Activated CD4-positive, alpha-beta T cell treated with anti-CD3 and anti-CD28 coated beads, Interleukin-2, amount 10 ng/mL, durations not matched to agents 7 days and 5 days (primary cell): ENCODE measurements at regions of chr7 and their contacts with region 1.

Region 1: GRCh38 chr7:55964261-55965099 is at the start of gene NIPSNAP2:
- DNase-seq: peak; percentile 42
- H3K4me3 Mint-ChIP-seq: peak within 1 kb of the TSS; percentile 82
- H3K27ac Mint-ChIP-seq: peak within 1 kb of the TSS; percentile 93
- H3K4me1 Mint-ChIP-seq: peaks cover 33% of the 10 kb centered on the region
- H3K27me3 Mint-ChIP-seq: no peaks in the 10 kb centered on the region
- total RNA-seq, gene NIPSNAP2: 35.4 to 38.6 TPM

Region 2: DNA sequence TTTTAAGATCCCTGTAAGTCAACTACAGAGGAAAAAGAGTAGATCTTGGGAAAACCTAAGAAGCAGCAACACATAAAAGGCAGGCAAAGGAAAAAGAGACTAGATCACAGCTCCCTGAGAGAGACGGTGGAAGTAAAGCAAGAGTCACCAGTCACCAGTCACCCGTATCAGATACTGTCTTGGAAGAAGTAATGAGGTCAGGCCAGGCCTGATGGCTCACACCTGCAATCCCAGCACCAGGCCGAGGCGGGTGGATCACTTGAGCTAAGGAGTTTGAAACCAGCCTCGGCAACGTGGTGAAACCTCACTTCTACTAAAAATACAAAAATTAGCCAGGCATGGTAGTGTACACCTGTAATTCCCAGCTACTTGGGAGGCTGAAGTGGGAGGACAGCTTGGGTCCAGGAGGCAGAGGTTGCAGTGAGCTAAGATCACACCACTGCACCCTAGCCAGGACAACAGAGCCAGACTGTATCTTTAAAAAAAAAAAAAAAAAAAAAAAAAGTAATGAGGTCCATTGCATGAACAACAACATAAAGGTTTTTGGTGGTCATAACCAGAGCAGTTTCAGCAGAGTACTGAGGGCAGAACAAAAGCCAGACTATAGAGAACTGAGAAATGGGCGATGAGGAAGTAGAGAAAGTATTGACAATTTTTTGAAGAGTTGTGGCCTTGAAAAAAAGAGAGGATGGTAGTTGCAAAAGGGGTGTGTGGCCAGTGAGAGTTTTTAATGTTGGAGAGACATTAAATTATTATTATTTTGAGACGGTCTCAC is 60.3 kb before region 1 on chr7:
- CTCF ChIA-PET with region 1: no interaction called
- POLR2A ChIA-PET with region 1: no interaction called
- DNase-seq: no peak
- H3K4me3 Mint-ChIP-seq: no peak overlapping the region
- H3K27ac Mint-ChIP-seq: no peak overlapping the region
- H3K4me1 Mint-ChIP-seq: no peaks in the 10 kb centered on the region
- H3K27me3 Mint-ChIP-seq: no peaks in the 10 kb centered on the region

Region 3: GRCh38 chr7:55977831-55978230 is 13.4 kb after region 1 on chr7:
- CTCF ChIA-PET with region 1: interaction called, 6 read pairs
- POLR2A ChIA-PET with region 1: interaction called, 10 read pairs
- DNase-seq: no peak
- H3K4me3 Mint-ChIP-seq: no peak overlapping the region
- H3K27ac Mint-ChIP-seq: no peak overlapping the region
- H3K4me1 Mint-ChIP-seq: no peaks in the 10 kb centered on the region
- H3K27me3 Mint-ChIP-seq: no peaks in the 10 kb centered on the region

Region 4: GRCh38 chr7:56447864-56448693 is 483.6 kb after region 1 on chr7:
- CTCF ChIA-PET with region 1: no interaction called
- POLR2A ChIA-PET with region 1: no interaction called
- DNase-seq: no peak
- H3K4me3 Mint-ChIP-seq: no peak overlapping the region
- H3K27ac Mint-ChIP-seq: no peak overlapping the region
- H3K4me1 Mint-ChIP-seq: no peaks in the 10 kb centered on the region
- H3K27me3 Mint-ChIP-seq: no peaks in the 10 kb centered on the region